ENCODE measurements at regions of chr5 and their contacts with region 1.

Region 1: GRCh38 chr5:150161242-150162141 is 5.1 kb upstream of the CDX1 start:
- DNase-seq: peak; percentile 88
- H3K4me3 Mint-ChIP-seq: no peak overlapping the region
- H3K27ac Mint-ChIP-seq: no peak overlapping the region
- H3K4me1 Mint-ChIP-seq: peaks cover 12% of the 10 kb centered on the region
- H3K27me3 Mint-ChIP-seq: no peaks in the 10 kb centered on the region
- CTCF ChIP-seq: peak; percentile 98

Region 2: GRCh38 chr5:149953436-149954121 is 207.9 kb before region 1 on chr5:
- CTCF ChIA-PET with region 1: no interaction called
- POLR2A ChIA-PET with region 1: no interaction called
- intact Hi-C with region 1: no loop called
- DNase-seq: no peak
- H3K4me3 Mint-ChIP-seq: no peak overlapping the region
- H3K27ac Mint-ChIP-seq: no peak overlapping the region
- H3K4me1 Mint-ChIP-seq: peaks cover 26% of the 10 kb centered on the region
- H3K27me3 Mint-ChIP-seq: no peaks in the 10 kb centered on the region
- CTCF ChIP-seq: no peak

Region 3: DNA sequence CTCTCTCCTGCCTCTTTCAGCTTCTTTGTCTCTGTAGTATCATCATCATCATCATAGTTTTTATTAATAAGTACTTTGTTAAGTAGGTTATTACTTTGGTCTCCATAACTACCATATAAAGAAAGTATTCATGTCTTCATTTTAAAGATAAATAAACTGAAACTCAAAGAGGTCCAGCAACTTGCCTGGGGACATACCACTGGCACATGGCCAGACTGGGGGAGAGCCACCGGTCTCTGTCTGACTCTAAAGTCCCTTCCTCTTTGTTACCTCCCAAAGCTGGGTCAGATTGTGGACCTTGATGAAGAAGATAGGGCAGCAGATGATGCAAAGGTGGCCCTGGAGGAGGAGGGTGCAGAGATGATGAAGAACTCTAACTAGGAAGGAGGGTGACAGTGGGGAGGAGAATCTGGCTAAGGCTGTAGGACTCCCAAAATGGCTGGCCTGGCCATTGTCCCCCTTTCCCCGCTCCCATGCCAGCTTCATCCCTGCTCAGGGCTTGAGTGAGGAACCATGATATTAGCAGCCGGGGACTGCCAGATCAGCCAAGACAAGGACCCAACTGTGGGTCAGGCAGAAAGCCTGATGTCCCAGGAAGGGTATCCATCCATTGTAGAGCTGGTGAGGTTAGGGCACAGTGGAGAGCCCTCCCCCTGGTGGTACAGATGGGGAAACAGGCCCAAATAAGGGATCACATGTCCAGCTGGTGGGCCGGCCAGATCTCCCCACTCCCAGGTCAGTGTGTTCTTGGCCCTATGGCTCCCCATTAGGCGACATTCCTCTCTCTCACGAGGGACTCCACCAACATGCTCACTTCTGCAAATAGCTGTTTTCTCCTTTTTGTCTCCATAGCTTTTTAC is 13.8 kb after region 1 on chr5:
- CTCF ChIA-PET with region 1: interaction called, 35 read pairs
- POLR2A ChIA-PET with region 1: no interaction called
- intact Hi-C with region 1: no loop called
- DNase-seq: peak; percentile 65
- H3K4me3 Mint-ChIP-seq: no peak overlapping the region
- H3K27ac Mint-ChIP-seq: no peak overlapping the region
- H3K4me1 Mint-ChIP-seq: peaks cover 2% of the 10 kb centered on the region
- H3K27me3 Mint-ChIP-seq: peaks cover 7% of the 10 kb centered on the region
- CTCF ChIP-seq: peak; percentile 45

Measured in MCF 10A (cell line).